A673 (cell line): ENCODE measurements at regions of chr3 and their contacts with region 1.

Region 1: DNA sequence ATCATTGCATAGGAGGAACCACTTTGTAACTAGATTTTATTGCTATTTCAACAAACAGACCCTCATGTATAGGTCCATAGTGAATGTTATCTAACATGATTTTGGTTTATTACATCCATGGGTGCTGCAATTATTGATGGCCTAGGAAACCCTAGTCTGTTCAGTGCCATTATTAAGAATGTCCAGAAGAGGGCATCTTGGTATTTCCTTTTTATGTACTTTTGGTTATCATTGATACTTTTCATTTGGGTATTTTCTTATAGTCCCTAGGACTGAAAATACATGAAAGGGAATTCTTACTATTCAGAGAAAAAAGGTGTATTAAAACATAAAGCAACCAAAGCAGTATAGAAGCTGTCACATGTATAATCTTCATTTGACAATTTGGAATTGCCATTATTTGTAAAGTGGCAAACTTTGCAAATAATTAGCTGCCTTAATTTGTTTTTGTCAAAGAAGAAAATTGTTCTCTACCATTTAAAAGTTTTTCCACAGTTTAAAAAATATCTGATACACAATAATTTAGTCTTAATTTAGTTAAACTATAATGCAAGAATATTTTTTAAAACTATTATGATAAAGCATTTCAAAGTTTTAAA is 48.7 kb downstream of the CNOT10 start:
- DNase-seq: peak; percentile 57
- H3K4me3 ChIP-seq: no peak overlapping the region
- H3K27ac ChIP-seq: no peak overlapping the region
- H3K4me1 ChIP-seq: no peaks in the 10 kb centered on the region
- H3K27me3 ChIP-seq: no peaks in the 10 kb centered on the region
- CTCF ChIP-seq: peak; percentile 66

Region 2: DNA sequence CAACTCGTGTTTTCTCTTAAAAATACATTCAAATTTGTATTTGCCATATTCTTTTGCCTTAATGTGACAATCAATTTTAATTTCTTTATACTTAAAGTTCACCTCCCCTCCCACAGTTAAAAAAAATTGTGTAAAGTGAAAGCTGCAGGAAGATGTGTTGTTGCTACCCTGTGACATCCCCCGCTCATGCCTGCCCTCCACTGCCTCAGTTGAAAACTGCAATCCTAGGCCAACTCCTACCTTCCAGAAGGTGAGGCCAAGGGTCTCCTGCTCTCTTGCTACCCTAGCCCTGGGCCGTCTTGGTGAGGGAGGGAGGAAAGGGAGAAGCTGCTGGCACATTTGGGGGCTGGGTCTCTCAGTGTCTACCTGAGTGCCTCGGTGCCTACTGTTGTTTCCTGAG is 399.1 kb before region 1 on chr3:
- CTCF ChIA-PET with region 1: no interaction called
- POLR2A ChIA-PET with region 1: no interaction called
- intact Hi-C with region 1: no loop called
- DNase-seq: no peak
- H3K4me3 ChIP-seq: no peak overlapping the region
- H3K27ac ChIP-seq: no peak overlapping the region
- H3K4me1 ChIP-seq: no peaks in the 10 kb centered on the region
- H3K27me3 ChIP-seq: no peaks in the 10 kb centered on the region
- CTCF ChIP-seq: peak; percentile 39; the same call in 1 of the 2 replicates

Region 3: GRCh38 chr3:32781210-32781968 is 47.7 kb after region 1 on chr3:
- CTCF ChIA-PET with region 1: no interaction called
- POLR2A ChIA-PET with region 1: no interaction called
- intact Hi-C with region 1: loop called (anchors 5 kb)
- DNase-seq: peak; percentile 82
- H3K4me3 ChIP-seq: peak overlapping the region; percentile 57
- H3K27ac ChIP-seq: no peak overlapping the region
- H3K4me1 ChIP-seq: peaks cover 7% of the 10 kb centered on the region
- H3K27me3 ChIP-seq: no peaks in the 10 kb centered on the region
- CTCF ChIP-seq: peak; percentile 72